Endothelial cell of umbilical vein (primary cell): ENCODE measurements at regions of chr22 and their contacts with region 1.

Region 1: DNA sequence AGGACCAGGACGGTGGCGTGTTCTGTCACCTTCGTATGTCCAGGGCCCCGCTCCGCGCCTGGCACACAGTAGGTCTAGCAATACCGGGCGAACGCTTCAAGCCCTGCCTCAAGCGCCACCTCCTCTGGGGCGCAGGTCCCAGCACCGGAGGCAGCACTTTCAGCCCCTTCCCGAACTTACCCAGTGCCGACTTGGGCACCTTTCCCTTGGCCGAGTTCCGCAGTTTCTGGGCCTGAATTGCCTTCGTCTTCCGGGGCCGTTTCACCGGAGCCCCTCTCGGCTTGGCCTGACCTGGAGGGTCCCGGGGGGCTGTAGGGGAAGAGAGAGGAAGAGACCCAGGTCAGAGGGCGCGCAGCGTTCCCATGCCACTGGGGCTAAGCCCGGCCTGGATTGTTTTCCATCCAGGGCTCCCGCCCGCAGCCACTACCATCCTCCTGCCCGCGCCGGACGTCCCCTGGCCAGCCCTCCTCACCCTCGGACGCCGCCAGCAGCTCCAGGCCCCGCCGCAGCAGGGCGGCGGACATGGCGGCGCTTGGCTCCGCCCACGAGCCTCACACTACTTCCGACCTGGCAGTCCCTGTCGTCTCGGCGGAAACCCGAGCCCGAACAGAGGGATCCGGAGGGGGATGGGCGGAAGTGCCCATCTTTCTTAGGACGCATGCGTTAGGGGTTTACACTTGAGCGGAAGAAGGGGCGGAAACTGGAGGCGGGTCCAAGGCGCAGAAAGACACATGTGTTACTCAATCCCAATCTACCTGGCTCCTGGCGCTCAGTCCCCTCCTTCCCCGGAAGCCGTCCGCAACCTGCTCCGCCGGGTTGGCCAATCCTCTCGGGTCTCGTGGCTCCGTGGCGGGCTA is at the start of gene RPS19BP1:
- DNase-seq: peak; percentile 98
- H3K4me3 ChIP-seq: peak within 1 kb of the TSS; percentile 70 to 83 (median 82)
- H3K27ac ChIP-seq: peak within 1 kb of the TSS; percentile 74
- H3K4me1 ChIP-seq: peaks cover 30% of the 10 kb centered on the region
- H3K27me3 ChIP-seq: no peaks in the 10 kb centered on the region
- CTCF ChIP-seq: peak in 1 of 2 donors; percentile 1
- POLR2A ChIP-seq: peak; percentile 96
- total RNA-seq, gene RPS19BP1: 63.0 and 66.6 TPM in 2 replicates

Region 2: DNA sequence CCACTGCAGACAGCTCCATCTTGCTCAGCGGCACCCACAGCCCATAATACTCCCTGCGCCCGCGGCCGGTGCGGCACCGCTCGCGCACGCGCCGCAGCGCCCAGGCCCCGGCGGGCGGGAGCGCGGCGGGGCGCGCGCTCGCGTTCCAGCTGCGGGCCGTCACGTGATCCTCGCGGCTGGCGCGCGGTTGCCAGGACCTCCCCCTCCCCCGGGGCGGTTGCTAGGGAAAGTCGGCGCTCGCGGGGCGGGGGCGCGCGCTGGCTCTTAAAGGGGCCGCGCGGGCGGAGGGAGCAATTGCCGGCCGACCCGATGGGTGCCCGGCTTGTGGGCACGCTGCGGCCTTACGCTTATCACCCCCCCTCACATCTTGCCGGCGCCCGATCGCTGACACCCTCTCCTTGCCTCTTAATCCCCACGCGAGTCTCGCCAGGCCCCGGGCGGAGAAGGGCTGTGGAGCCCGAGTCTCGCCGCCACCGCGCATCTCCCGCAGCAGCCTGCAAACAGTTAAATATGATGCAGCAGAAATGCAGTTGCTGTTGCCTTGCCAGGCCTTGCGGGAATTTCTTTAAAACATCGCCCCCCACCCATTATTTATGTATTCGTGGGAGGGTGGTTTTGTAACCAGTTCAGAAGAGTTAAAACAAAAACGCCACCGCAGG is 660.1 kb before region 1 on chr22 and contains the start of gene CBX6:
- CTCF ChIA-PET with region 1: interaction called, 4 read pairs
- POLR2A ChIA-PET with region 1: no interaction called
- dilution Hi-C with region 1: no loop called
- intact Hi-C with region 1: loop called (anchors 5 kb)
- DNase-seq: peak; percentile 92
- H3K4me3 ChIP-seq: peak within 1 kb of the TSS; percentile 76 to 82 (median 79)
- H3K27ac ChIP-seq: peak within 1 kb of the TSS; percentile 21
- H3K4me1 ChIP-seq: peaks cover 17% of the 10 kb centered on the region
- H3K27me3 ChIP-seq: peaks cover 14 to 25% of the 10 kb centered on the region in 2 experiments
- CTCF ChIP-seq: no peak
- POLR2A ChIP-seq: peak; percentile 80
- total RNA-seq, gene CBX6: 60.9 and 62.6 TPM in 2 replicates

Region 3: DNA sequence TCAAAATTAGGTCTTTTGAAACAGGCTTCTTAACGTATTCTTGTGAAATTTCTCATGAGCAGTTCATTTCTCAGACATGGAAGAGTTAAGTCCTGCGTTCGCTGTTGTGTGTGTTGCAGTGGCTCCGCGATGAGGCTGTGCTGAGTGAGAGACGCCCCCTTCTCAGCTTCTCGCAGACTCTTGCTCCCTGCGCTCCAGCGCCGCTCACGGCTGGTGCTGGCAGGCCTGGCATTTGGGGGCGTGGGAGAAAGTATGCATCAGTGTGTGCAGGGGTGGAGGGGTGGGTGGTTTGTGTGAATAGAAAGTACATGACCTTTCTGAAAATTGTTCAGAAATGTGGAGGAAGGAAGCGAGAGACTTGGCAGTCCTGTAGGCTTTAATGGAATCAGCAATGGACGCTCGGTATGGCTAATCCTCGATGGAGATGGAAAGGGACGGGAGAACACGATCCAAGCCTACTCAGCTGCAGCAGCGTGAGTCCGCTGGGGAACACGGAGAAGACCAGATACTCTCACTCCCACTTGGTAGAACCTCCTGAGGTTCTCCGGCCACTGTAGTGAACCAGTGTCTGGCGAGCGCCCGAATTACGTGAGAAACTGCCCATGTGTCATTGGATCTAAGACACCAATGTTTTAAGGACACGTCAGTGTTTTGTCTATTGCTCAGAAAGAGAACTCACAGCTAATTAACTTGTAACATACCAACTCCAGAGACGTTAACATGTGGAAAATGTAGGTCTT is 126.9 kb before region 1 on chr22:
- CTCF ChIA-PET with region 1: interaction called, 16 read pairs
- POLR2A ChIA-PET with region 1: no interaction called
- dilution Hi-C with region 1: no loop called
- intact Hi-C with region 1: no loop called
- DNase-seq: peak; percentile 35
- H3K4me3 ChIP-seq: no peak overlapping the region
- H3K27ac ChIP-seq: no peak overlapping the region
- H3K4me1 ChIP-seq: peaks cover 2% of the 10 kb centered on the region
- H3K27me3 ChIP-seq: no peaks in the 10 kb centered on the region
- CTCF ChIP-seq: no peak
- POLR2A ChIP-seq: no peak

Region 4: GRCh38 chr22:39502109-39502788 is 30.2 kb before region 1 on chr22 and contains the start of gene MIEF1:
- CTCF ChIA-PET with region 1: interaction called, 130 read pairs
- POLR2A ChIA-PET with region 1: no interaction called
- dilution Hi-C with region 1: no loop called
- intact Hi-C with region 1: loop called (anchors 1 kb)
- DNase-seq: peak; percentile 96
- H3K4me3 ChIP-seq: peak within 1 kb of the TSS; percentile 51 to 76 (median 67)
- H3K27ac ChIP-seq: peak within 1 kb of the TSS; percentile 5
- H3K4me1 ChIP-seq: peaks cover 12% of the 10 kb centered on the region
- H3K27me3 ChIP-seq: peaks cover 0 to 3% of the 10 kb centered on the region in 2 experiments
- CTCF ChIP-seq: no peak
- POLR2A ChIP-seq: peak; percentile 79
- total RNA-seq, gene MIEF1: 24.7 and 31.1 TPM in 2 replicates

Region 5: DNA sequence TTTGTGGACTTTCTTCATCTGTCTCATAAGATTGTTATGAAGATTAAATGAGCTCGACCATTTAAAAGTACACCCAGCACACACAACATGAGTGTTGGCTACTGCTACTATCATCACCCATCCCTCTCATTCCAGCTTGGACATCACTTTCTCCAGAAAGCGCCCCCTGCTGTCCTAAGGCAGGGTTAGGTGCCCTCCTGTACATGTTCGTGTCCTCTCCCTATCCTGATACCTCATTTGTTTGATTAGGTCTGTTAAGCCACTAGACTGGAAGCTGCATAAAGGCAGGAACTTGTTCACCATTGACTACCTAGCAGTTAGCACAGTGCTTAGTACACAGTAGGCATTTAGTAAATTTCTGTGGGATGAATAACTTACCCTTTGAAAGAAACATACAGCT is 275.6 kb after region 1 on chr22:
- CTCF ChIA-PET with region 1: interaction called, 62 read pairs
- POLR2A ChIA-PET with region 1: no interaction called
- dilution Hi-C with region 1: no loop called
- intact Hi-C with region 1: no loop called
- DNase-seq: peak; percentile 28
- H3K4me3 ChIP-seq: no peak overlapping the region
- H3K27ac ChIP-seq: no peak overlapping the region
- H3K4me1 ChIP-seq: no peaks in the 10 kb centered on the region
- H3K27me3 ChIP-seq: peaks cover 14 to 16% of the 10 kb centered on the region in 2 experiments
- CTCF ChIP-seq: peak; percentile 61 to 64
- POLR2A ChIP-seq: no peak

Region 6: GRCh38 chr22:40044102-40044869 is 511.8 kb after region 1 on chr22:
- CTCF ChIA-PET with region 1: interaction called, 19 read pairs
- POLR2A ChIA-PET with region 1: no interaction called
- dilution Hi-C with region 1: no loop called
- intact Hi-C with region 1: no loop called
- DNase-seq: peak; percentile 99
- H3K4me3 ChIP-seq: peak overlapping the region; percentile 48 to 95 (median 68)
- H3K27ac ChIP-seq: peak overlapping the region; percentile 87
- H3K4me1 ChIP-seq: peaks cover 19% of the 10 kb centered on the region
- H3K27me3 ChIP-seq: peaks cover 0 to 16% of the 10 kb centered on the region in 2 experiments
- CTCF ChIP-seq: no peak
- POLR2A ChIP-seq: no peak

Region 7: DNA sequence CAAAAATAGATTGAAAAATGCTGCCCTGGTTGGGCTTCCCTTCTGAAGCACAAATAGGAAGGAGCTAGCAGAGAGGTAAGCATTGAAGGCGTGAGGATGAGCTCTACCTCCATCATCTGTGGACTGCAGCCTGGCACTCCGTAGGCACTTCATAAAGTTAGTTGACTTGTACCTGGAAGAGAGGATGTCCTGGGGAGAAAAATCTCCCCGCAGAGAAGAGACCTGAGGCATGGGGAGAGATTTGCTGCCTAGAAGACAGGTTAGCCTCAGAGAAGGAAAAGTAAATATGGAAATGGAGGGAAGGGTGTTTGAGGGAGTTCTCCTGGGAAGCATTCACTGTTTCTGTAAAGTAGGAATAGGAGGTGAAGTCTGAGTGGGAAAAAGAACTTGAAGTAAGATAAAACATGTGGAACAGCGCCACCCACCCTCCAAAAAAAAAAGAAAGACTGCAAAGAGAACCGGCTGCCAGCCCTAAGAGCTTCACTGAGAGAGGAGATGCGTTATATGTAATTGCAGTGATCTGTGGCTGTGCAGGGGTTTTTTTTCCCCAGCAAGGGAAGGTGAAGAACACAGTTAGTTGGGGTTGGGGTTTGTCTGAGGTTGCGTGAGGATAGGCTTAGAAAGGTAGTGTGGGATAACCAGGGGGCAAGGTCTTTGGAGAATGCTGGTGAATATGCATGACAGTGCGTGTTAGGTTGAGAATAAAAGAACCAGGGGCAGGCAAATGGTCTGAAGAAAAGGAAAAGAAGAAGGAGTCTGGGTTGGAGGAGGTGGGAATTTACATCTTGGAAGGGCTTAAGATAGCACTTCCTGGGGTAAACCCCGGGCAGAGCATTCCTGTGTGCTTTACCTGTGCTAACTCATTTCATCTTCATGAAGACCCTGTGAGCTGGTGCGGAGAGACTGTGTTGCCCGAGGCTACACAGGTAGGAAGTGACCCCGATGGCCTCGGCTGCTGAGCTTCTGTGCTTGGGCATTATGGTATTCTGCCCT is 661.3 kb after region 1 on chr22:
- CTCF ChIA-PET with region 1: no interaction called
- POLR2A ChIA-PET with region 1: no interaction called
- dilution Hi-C with region 1: no loop called
- intact Hi-C with region 1: no loop called
- DNase-seq: peak; percentile 41
- H3K4me3 ChIP-seq: no peak overlapping the region
- H3K27ac ChIP-seq: no peak overlapping the region
- H3K4me1 ChIP-seq: peaks cover 10% of the 10 kb centered on the region
- H3K27me3 ChIP-seq: no peaks in the 10 kb centered on the region
- CTCF ChIP-seq: peak; percentile 16 to 25
- POLR2A ChIP-seq: no peak